ENCODE measurements at regions of chr9 and their contacts with region 1.

Region 1: GRCh38 chr9:91775011-91775707 is 174.9 kb downstream of the ROR2 start:
- DNase-seq: no peak

Region 2: DNA sequence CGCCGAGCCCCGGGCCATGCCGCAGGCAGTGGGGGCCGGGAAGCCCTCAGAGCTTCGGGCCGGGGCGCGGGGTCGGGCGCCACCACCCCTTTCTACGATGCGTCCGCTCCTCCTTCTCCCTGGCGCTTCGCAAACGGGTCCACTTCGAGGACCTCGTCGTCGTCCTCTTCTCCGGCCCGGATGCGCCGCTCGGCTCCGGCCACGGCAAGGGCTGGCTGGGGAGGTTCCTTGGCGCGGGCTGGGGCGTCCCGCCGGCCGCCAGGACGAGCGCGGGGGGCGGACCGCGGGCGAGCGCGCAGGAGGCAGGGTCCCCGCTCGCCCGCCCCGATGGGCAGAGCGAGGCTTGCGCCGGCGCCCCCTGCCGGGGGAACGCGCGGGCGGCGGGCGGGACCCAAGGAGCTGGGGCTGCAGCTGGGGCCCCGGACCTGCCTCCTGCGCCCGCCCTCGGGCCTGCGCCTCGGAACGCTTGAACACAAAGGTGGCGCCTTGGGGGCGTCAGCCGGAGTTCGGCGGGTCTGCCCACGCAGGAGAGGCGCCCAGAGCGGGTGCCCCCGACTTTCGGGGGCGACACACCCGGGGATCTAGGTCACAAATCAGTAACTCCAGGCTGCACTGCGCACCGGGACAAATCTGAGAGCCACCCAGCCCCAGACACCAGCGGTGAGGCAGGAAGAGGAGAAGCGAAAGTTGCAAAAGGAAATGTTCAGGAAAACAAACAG is 174.9 kb after region 1 on chr9 and contains the start of gene ROR2:
- intact Hi-C with region 1: loop called (anchors 5 kb)
- DNase-seq: peak; percentile 73
- total RNA-seq, gene ROR2: 0.65 TPM

Measured in cardiac septum (tissue), 1 donor.